MCF 10A (cell line): ENCODE measurements at regions of chr13 and their contacts with region 1.

Region 1: GRCh38 chr13:45280751-45281634 is 60.0 kb downstream of the TPT1 start:
- DNase-seq: peak; percentile 92
- H3K4me3 Mint-ChIP-seq: no peak overlapping the region
- H3K27ac Mint-ChIP-seq: no peak overlapping the region
- H3K4me1 Mint-ChIP-seq: peaks cover 5% of the 10 kb centered on the region
- H3K27me3 Mint-ChIP-seq: no peaks in the 10 kb centered on the region
- CTCF ChIP-seq: peak; percentile 83

Region 2: DNA sequence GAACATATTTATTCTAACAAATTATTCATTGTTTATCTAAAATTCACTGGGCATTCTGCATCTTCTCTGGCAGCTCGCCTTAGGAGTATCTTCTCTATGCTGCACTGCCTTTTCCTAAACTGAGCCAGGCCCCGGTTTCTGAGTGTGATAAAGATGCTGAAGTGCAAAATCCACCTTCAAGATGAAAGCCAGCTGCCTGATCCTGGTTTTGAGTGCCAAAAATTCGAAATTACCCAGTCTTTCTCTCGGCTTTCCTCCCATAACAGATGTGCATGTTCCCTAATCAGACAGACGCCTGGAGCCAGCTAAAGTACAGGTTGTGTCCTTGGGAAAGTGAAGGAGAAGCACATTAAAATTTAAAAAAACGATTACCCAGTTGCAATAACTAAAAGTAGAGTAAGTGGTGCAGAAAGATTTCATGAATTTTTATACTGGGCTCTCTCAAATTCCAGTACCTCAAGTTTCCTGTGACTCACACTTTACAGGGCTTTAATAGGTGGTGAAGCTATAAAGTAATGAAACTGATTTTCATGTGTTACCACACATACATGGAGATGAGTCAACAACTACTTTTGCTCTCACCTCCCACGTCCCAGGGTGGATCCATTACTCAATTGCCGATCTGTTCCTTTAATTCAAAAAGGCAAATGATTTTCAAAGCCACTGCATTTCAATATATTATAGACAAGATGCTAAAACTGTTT is 225.6 kb before region 1 on chr13:
- CTCF ChIA-PET with region 1: interaction called, 39 read pairs
- POLR2A ChIA-PET with region 1: interaction called, 16 read pairs
- intact Hi-C with region 1: loop called (anchors 2 kb)
- DNase-seq: peak; percentile 93
- H3K4me3 Mint-ChIP-seq: peak overlapping the region; percentile 66
- H3K27ac Mint-ChIP-seq: peak overlapping the region; percentile 88
- H3K4me1 Mint-ChIP-seq: peaks cover 14% of the 10 kb centered on the region
- H3K27me3 Mint-ChIP-seq: no peaks in the 10 kb centered on the region
- CTCF ChIP-seq: no peak

Region 3: DNA sequence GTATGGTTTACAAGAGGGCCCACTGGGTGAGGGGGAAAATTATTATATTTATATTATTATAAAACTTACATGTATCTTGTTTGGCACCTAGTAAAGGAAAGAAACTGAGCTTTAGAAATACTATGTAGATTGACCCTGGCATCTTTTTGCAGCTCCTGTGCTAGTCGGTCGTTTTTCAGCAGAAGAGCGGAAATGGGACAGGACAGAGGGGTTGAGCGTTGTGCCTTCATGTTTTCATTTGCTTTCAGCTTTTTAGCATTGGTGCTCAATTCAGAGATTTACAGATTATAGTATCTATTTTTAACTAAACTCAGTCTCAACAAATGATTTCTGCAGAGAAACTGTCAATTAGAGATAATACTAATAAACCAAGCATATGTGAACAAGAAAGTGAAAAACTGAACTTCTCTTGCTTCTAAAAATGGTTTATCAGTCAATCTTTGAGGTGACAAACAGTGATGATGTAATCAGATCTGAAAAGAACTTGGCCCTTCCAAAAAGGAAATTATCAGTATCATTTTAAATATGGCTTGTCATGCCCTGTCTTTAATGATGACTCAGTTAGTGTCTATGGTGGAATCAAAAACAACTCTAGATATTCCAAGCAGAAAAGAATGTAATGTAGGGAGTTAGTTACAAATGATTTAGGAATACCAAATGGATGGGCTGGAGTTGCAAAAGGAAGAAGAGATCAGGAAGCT is 23.2 kb before region 1 on chr13:
- CTCF ChIA-PET with region 1: interaction called, 3 read pairs
- POLR2A ChIA-PET with region 1: interaction called, 10 read pairs
- intact Hi-C with region 1: no loop called
- DNase-seq: no peak
- H3K4me3 Mint-ChIP-seq: no peak overlapping the region
- H3K27ac Mint-ChIP-seq: no peak overlapping the region
- H3K4me1 Mint-ChIP-seq: peaks cover 22% of the 10 kb centered on the region
- H3K27me3 Mint-ChIP-seq: no peaks in the 10 kb centered on the region
- CTCF ChIP-seq: no peak

Region 4: GRCh38 chr13:45292176-45292575 is 11.2 kb after region 1 on chr13:
- CTCF ChIA-PET with region 1: interaction called, 26 read pairs
- POLR2A ChIA-PET with region 1: interaction called, 5 read pairs
- intact Hi-C with region 1: no loop called
- DNase-seq: peak; percentile 61
- H3K4me3 Mint-ChIP-seq: no peak overlapping the region
- H3K27ac Mint-ChIP-seq: no peak overlapping the region
- H3K4me1 Mint-ChIP-seq: peaks cover 13% of the 10 kb centered on the region
- H3K27me3 Mint-ChIP-seq: no peaks in the 10 kb centered on the region
- CTCF ChIP-seq: no peak

Region 5: DNA sequence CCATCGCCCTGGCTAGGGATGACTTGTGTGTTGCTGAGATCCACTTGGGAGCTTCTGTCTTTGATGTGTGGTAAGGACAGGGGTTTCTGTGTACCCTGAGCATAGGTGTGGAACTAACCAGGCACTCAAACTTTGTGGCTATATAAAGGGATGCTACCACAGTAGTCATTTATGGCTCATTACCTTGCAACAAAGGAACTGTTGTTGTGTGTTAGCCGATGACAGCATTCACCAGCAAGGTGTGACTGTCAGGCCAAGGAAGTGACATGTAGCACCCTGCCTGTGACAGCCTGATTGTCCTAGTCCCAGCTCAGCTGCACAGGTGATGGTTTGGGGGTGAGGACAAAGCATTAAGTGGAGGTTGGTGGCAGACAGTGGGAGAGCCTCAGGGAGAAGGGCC is 257.4 kb after region 1 on chr13:
- CTCF ChIA-PET with region 1: no interaction called
- POLR2A ChIA-PET with region 1: no interaction called
- intact Hi-C with region 1: no loop called
- DNase-seq: no peak
- H3K4me3 Mint-ChIP-seq: no peak overlapping the region
- H3K27ac Mint-ChIP-seq: no peak overlapping the region
- H3K4me1 Mint-ChIP-seq: no peaks in the 10 kb centered on the region
- H3K27me3 Mint-ChIP-seq: no peaks in the 10 kb centered on the region
- CTCF ChIP-seq: no peak